ENCODE measurements at regions of chr20 and their contacts with region 1.

Region 1: DNA sequence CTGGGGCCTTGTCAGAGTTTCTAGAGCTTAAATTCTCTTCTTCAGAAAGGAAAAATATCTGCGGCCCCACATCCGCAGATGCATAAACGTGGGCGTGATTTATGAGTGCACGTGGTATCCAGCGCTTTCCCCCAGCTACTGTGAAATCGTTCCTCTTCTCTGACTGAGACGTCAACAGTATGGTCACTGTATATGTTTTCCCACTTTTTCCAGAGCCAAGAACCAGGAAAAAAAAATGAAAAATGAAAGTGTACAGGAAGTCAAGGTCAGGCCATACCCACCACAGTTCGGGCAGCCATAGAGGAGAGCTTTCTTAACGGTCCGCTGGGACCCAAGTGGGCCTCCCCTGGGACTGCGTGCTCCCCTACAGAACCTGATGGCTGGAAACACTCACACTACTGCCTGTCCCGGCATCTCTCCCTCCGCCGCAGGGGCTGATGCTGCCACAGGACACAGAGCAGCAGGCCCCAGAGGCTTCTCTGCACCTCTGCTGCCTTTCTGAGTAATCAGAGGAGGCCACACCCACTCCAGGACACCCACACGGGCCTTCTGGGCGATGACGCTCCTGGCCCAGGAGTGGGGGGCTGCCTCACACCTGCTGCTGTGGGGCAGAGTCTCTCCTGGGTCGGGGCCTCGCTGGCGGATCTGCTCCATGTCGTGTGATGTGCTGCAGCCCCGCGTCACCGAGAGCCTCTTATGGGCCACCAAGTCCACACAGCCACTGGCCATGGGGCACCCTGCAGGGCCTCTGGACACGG is 16.4 kb upstream of the STX16 start:
- DNase-seq: no peak
- H3K4me3 ChIP-seq: peak overlapping the region in 1 of 3 donors; percentile 41
- H3K27ac ChIP-seq: no peak overlapping the region
- H3K4me1 ChIP-seq: no peaks in the 10 kb centered on the region
- H3K27me3 ChIP-seq: no peaks in the 10 kb centered on the region
- CTCF ChIP-seq: no peak
- POLR2A ChIP-seq: no peak

Region 2: DNA sequence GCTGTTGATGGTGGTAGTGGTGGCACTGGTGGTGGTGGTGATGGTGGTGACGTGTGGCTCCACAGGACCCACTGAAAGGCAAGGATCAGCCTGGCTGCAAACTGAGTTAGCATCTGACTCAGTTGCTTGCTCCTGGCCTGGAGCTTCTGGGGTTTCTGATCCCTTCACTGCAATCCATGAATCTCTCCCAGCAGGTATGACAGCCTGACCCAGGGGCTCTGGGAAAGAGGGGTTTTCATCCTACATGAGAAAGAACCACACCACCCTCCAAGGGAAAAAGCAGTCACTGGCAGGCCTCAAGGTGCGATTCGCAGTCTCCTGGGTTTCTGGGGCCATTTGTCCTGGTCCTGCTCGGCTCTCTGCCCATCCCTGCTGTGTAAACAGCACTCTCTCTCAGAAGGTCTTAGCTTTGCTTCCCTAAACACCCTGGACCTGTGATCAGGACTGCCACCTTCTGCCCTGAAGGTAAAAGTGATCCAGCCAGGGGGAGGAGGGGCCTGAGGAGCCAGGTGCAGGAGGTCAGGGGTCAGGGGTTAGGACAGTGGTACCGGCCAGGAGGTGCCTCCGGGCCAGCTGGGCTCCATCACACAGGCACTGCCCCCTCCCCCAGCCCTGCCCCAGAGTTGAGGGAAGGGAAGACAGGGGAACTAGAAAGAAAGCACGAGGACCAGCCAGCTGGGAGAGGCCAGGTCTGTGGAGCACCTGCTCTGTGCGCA is 1520.3 kb before region 1 on chr20:
- intact Hi-C with region 1: loop called (anchors 5 kb)
- DNase-seq: no peak
- H3K4me3 ChIP-seq: no peak overlapping the region
- H3K27ac ChIP-seq: no peak overlapping the region
- H3K4me1 ChIP-seq: no peaks in the 10 kb centered on the region
- H3K27me3 ChIP-seq: no peaks in the 10 kb centered on the region
- CTCF ChIP-seq: no peak
- POLR2A ChIP-seq: no peak

Region 3: GRCh38 chr20:58598211-58599014 is 36.3 kb before region 1 on chr20:
- intact Hi-C with region 1: loop called (anchors 1 kb)
- DNase-seq: no peak
- H3K4me3 ChIP-seq: no peak overlapping the region
- H3K27ac ChIP-seq: no peak overlapping the region
- H3K4me1 ChIP-seq: no peaks in the 10 kb centered on the region
- H3K27me3 ChIP-seq: no peaks in the 10 kb centered on the region
- CTCF ChIP-seq: no peak
- POLR2A ChIP-seq: no peak